ENCODE measurements at regions of chrX and their contacts with region 1.

Region 1: GRCh38 chrX:42992199-42992943 is 214.4 kb upstream of the PPP1R2C start:
- DNase-seq: no peak
- ATAC-seq: no peak
- H3K4me3 ChIP-seq: no peak overlapping the region
- H3K4me3 Mint-ChIP-seq: no peak overlapping the region
- H3K27ac ChIP-seq: no peak overlapping the region
- H3K27ac Mint-ChIP-seq: peak overlapping the region; percentile 28
- H3K4me1 ChIP-seq: peaks cover 18 to 29% of the 10 kb centered on the region in 2 donors
- H3K4me1 Mint-ChIP-seq: peaks cover 48% of the 10 kb centered on the region
- H3K27me3 ChIP-seq: no peaks in the 10 kb centered on the region
- H3K27me3 Mint-ChIP-seq: no peaks in the 10 kb centered on the region
- CTCF ChIP-seq: no peak

Region 2: DNA sequence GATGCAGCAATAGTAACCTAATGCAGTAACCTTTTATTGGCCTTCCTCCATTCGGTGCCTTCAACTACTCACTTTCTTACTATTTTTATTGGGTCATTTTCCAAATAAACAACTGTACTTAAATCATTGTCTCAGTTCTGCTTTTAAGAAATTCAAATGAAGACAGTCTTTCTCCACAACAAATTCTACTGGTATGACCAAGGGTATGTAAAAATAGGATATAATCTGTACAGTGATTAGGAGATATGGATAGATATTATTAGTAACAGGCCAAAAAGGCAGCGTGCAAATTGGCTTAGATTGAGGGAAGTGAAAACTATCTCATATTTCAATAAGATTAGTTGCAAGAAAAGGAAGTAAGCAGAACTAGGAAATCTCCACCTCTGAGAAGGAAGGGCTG is 37.0 kb before region 1 on chrX:
- CTCF ChIA-PET with region 1: no interaction called
- POLR2A ChIA-PET with region 1: no interaction called
- intact Hi-C with region 1: loop called (anchors 2 kb)
- DNase-seq: peak; percentile 38
- ATAC-seq: peak; percentile 76
- H3K4me3 ChIP-seq: no peak overlapping the region
- H3K4me3 Mint-ChIP-seq: peak overlapping the region; percentile 57
- H3K27ac ChIP-seq: peak overlapping the region; percentile 65 to 79
- H3K27ac Mint-ChIP-seq: peak overlapping the region; percentile 86
- H3K4me1 ChIP-seq: peaks cover 36 to 41% of the 10 kb centered on the region in 2 donors
- H3K4me1 Mint-ChIP-seq: peaks cover 37% of the 10 kb centered on the region
- H3K27me3 ChIP-seq: no peaks in the 10 kb centered on the region
- H3K27me3 Mint-ChIP-seq: no peaks in the 10 kb centered on the region
- CTCF ChIP-seq: no peak

Region 3: DNA sequence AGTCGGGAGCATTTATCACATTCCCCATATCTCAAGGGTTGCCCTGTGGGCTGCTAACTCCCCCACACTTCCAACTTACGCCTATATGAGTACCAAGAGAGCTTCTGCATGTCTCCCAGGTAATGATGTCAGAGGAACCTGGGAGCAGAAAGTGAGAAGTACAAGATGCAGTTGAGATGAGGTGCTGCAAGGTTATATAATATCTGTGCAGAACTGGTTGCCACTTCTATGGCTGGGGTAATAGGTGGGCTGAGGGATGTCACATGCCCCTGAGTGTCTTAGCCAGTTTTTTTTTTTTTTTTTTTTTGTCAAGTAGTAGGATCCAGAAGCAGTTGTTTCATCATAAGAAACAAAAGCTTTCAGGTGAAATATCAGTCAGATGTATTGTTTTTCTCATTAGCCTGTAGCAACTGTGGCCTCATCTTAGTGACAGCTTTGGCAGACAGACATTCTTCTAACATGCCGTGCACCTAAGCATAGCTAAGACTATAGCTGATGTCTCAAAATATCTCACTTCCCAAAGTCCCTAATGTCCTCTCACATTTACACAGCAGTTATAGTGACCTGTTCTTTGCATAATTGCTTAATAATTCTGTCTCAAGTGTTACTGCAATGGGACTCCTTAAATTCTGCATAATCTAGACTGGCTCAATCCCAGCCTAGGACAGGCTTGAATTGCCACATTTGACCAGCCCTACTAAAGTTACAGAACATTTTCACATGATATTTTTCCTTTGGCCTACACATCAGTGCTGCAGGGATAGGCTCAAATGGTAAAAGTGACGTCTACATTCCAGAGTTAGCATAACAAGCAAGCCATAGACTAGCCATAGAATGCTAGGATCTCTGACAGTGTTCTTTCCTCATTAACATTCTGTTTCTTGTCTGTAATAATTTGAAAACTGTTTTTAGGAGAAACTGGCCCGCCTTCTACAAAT is 907.8 kb after region 1 on chrX:
- CTCF ChIA-PET with region 1: no interaction called
- POLR2A ChIA-PET with region 1: no interaction called
- intact Hi-C with region 1: no loop called
- DNase-seq: no peak
- ATAC-seq: no peak
- H3K4me3 ChIP-seq: no peak overlapping the region
- H3K4me3 Mint-ChIP-seq: no peak overlapping the region
- H3K27ac ChIP-seq: no peak overlapping the region
- H3K27ac Mint-ChIP-seq: no peak overlapping the region
- H3K4me1 ChIP-seq: no peaks in the 10 kb centered on the region
- H3K4me1 Mint-ChIP-seq: no peaks in the 10 kb centered on the region
- H3K27me3 ChIP-seq: no peaks in the 10 kb centered on the region
- H3K27me3 Mint-ChIP-seq: peaks cover 2% of the 10 kb centered on the region
- CTCF ChIP-seq: no peak